GM18951 (cell line): ENCODE measurements at regions of chr22 and their contacts with region 1.

Region 1: GRCh38 chr22:47213571-47214230 is 451.3 kb downstream of the TBC1D22A start:
- POLR2A ChIP-seq: no peak

Region 2: GRCh38 chr22:48492366-48493320 is 1278.9 kb after region 1 on chr22:
- in situ Hi-C with region 1: loop called (anchors 25 kb)
- POLR2A ChIP-seq: no peak